Activated naive CD4-positive, alpha-beta T cell treated with anti-CD3 and anti-CD28 coated beads for 36 hours (primary cell): ENCODE measurements at regions of chr11 and their contacts with region 1.

Region 1: GRCh38 chr11:81787584-81788049 is 946.0 kb downstream of the FAM181B start:
- DNase-seq: peak; percentile 9
- H3K4me3 Mint-ChIP-seq: no peak overlapping the region
- H3K27ac Mint-ChIP-seq: peak overlapping the region; percentile 61
- H3K4me1 Mint-ChIP-seq: peaks cover 14% of the 10 kb centered on the region
- H3K27me3 Mint-ChIP-seq: no peaks in the 10 kb centered on the region

Region 2: DNA sequence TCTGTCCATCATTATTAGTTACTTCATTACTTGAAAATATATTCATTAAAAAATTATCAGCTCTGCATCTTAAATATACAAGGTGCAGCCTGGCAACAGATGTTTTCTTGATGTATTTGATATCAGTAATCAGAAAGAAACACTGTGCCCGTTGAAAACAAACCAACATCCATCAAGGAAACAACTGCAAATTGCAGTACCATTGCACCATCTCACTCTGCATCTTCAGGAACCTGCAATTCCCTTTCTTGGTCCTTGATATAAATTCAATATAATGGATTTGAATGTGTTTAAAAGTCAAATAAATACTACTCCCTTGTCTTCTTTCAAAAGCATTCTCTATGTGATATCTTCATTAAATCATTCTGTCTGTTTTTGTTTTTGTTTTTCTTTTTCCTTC is 185.1 kb before region 1 on chr11:
- CTCF ChIA-PET with region 1: no interaction called
- intact Hi-C with region 1: no loop called
- DNase-seq: no peak
- H3K4me3 Mint-ChIP-seq: no peak overlapping the region
- H3K27ac Mint-ChIP-seq: no peak overlapping the region
- H3K4me1 Mint-ChIP-seq: no peaks in the 10 kb centered on the region
- H3K27me3 Mint-ChIP-seq: peaks cover 3% of the 10 kb centered on the region

Region 3: DNA sequence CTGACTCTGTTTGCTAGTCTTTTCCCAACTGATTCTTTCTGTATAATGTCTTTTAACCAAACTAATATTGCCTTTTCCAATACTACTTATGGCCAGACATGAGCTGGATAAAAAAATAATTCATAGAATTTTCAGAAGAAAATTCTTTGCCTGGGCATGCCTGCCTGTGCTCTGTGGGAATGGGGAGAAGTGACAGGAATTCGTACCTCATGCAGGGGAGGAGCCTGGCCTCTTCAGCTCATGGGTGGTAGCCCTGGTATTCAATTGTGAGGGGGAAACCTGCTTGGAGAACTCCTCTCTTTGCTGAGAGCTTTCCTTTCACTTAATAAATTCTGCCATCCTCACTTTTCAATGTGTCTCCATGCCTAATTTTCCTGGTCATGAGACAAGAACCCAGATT is 17.2 kb after region 1 on chr11:
- CTCF ChIA-PET with region 1: no interaction called
- intact Hi-C with region 1: loop called (anchors 1 kb)
- DNase-seq: no peak
- H3K4me3 Mint-ChIP-seq: no peak overlapping the region
- H3K27ac Mint-ChIP-seq: no peak overlapping the region
- H3K4me1 Mint-ChIP-seq: no peaks in the 10 kb centered on the region
- H3K27me3 Mint-ChIP-seq: no peaks in the 10 kb centered on the region

Region 4: GRCh38 chr11:81869351-81870065 is 81.9 kb after region 1 on chr11:
- CTCF ChIA-PET with region 1: interaction called, 7 read pairs
- intact Hi-C with region 1: loop called (anchors 1 kb)
- DNase-seq: peak; percentile 99
- H3K4me3 Mint-ChIP-seq: peak overlapping the region; percentile 74
- H3K27ac Mint-ChIP-seq: peak overlapping the region; percentile 92
- H3K4me1 Mint-ChIP-seq: peaks cover 46% of the 10 kb centered on the region
- H3K27me3 Mint-ChIP-seq: no peaks in the 10 kb centered on the region

Region 5: DNA sequence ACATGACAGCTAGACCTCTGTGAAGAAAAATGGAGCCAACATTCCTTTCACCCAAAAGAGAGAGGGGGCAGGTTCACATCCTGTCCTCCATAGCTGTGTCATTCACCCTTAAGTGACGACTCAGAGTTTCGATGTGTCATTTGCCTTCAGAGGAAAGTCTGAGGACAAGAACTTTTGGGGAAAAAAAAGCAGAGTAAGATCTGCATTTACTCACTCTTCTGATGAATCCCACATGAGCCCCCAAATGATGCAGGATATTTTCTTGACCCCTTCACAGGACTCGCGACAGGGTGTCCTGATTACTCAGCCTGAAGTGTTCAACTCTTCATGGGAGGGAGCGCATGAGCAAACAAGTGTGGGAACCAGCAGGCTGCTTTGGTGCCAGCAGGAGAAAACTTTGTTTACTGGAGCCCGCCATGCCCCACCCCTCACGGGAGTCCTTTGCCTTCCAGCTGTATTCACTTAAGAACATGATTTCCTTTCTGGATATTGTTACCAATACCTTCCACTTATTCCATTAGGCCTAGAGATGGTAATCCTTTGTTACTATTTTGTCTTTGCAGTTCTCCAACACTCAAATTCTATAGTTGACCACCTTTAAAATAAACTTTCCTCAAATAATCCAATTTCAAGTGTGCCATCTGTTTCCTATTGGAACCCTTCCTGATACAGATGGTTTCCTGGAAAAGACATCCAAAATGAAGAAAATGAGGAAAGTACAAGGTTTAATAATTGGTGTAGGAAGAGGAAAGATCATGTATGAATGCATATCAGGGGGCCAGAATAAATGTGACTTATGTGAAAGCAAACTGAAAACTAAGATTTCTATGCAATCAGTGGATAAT is 216.3 kb after region 1 on chr11:
- CTCF ChIA-PET with region 1: no interaction called
- intact Hi-C with region 1: loop called (anchors 1 kb)
- DNase-seq: peak; percentile 30
- H3K4me3 Mint-ChIP-seq: no peak overlapping the region
- H3K27ac Mint-ChIP-seq: peak overlapping the region; percentile 44
- H3K4me1 Mint-ChIP-seq: peaks cover 25% of the 10 kb centered on the region
- H3K27me3 Mint-ChIP-seq: peaks cover 2% of the 10 kb centered on the region

Region 6: DNA sequence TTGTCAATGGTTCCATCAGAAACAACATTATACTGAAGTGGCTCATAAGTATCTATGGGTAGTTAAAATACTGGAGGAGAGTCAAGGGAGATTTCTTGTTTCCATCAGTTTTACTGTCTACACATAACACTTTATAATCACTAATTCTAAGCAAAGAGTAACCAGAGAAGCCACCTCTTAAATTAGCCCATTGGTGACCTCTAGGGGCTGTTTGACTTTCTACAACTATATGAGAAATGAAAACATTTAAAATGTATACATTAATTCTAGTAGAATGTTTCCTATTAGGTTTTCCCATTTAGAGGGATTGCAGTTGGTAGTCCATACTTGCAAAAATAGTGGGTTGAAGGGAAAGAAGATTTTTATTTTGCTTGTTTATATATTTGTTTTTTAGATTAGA is 441.7 kb after region 1 on chr11:
- CTCF ChIA-PET with region 1: no interaction called
- intact Hi-C with region 1: loop called (anchors 1 kb)
- DNase-seq: no peak
- H3K4me3 Mint-ChIP-seq: no peak overlapping the region
- H3K27ac Mint-ChIP-seq: no peak overlapping the region
- H3K4me1 Mint-ChIP-seq: no peaks in the 10 kb centered on the region
- H3K27me3 Mint-ChIP-seq: no peaks in the 10 kb centered on the region